PC-9 (cell line): ENCODE measurements at regions of chr17 and their contacts with region 1.

Region 1: DNA sequence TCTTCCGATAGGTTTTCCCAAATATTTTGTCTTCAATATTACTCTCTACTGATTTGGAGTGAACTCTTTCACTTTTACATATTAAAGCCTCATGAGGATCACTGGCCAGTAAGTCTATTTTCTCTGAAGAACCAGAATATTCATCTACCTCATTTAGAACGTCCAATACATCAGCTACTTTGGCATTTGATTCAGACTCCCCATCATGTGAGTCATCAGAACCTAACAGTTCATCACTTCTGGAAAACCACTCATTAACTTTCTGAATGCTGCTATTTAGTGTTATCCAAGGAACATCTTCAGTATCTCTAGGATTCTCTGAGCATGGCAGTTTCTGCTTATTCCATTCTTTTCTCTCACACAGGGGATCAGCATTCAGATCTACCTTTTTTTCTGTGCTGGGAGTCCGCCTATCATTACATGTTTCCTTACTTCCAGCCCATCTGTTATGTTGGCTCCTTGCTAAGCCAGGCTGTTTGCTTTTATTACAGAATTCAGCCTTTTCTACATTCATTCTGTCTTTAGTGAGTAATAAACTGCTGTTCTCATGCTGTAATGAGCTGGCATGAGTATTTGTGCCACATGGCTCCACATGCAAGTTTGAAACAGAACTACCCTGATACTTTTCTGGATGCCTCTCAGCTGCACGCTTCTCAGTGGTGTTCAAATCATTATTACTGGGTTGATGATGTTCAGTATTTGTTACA is 30.9 kb downstream of the BRCA1 start:
- DNase-seq: no peak
- H3K4me3 ChIP-seq: no peak overlapping the region
- H3K27ac ChIP-seq: no peak overlapping the region
- H3K4me1 ChIP-seq: no peaks in the 10 kb centered on the region
- H3K27me3 ChIP-seq: no peaks in the 10 kb centered on the region
- CTCF ChIP-seq: no peak

Region 2: DNA sequence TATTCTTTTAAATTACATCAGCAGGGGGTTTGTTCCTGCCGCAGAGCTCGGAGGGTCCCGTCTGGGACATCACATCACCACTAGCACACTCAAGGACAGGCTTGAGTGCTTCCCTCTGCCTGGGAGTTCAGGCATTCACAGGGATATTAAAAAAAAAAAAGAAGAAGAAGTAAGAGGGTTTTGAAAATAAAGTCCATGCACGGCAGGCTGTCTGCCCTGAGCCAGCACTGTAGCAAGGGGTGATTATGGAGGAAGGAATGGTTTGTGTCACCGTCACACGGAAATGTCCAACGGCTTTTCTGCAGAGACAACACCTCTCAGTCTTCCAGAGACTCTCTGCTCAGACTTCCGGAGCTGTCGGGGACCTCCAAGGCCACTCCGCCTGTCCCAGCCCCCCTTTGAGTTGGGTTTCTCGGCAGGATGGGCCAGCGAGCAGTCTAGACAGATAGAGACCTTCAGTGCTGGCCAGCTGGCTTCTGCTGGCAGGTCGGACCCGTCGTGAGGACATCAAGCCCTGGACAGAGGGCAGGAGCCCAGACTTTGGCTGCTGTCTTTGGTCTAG is 533.9 kb after region 1 on chr17:
- CTCF ChIA-PET with region 1: no interaction called
- POLR2A ChIA-PET with region 1: interaction called, 13 read pairs
- intact Hi-C with region 1: no loop called
- DNase-seq: no peak
- H3K4me3 ChIP-seq: no peak overlapping the region
- H3K27ac ChIP-seq: no peak overlapping the region
- H3K4me1 ChIP-seq: no peaks in the 10 kb centered on the region
- H3K27me3 ChIP-seq: no peaks in the 10 kb centered on the region
- CTCF ChIP-seq: no peak